Naive thymus-derived CD4-positive, alpha-beta T cell (primary cell): ENCODE measurements at regions of chr1 and their contacts with region 1.

Region 1: DNA sequence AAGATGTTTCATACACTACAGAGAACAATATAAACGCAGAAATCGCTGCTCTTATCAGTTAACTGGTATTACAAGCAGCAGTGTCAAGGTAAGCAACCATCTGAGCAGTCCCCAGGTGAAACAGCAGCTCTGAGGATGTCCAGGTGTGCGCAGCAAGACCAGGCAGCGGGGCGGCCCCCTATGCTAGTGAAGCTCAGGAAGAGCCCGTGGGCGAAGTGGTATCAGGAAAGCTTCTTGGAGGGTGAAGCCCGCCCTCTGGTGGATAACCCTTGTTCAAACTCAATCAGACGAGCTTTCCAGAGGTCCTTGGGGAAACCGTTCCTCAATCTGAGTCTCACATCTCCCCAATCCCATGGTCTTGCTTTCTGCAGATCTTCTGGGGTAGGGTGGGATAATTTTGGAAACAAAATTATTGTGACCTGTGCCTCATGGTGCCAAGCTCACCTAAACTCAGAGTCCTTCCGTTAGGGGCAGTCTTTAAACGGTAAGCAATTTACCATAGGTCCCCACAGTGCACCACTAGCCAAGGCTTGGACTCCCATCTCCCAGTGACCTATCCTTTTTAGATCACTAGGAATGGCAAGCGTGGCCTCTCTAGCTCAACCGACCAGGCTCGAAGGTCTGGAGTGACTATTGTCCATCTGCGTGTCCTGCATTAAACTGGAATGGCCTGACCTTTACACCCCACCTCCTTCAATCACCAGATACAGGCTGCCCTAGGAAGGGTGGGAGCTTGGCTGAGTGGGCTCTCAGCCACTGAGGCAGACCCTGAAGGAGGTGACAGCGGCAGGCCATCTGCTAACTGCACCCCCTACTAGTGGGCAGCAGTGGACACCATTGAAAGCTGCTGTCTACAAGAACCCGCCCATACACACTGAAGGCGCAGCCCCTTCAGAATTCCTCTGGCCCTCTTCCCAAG is 13.6 kb upstream of the FAM110D start:
- DNase-seq: peak; percentile 52 to 77 (median 72)
- ATAC-seq: peak; percentile 99
- H3K4me3 ChIP-seq: no peak overlapping the region
- H3K4me3 Mint-ChIP-seq: peak overlapping the region in 5 of 10 donors; percentile 15 to 66 (median 37)
- H3K27ac ChIP-seq: no peak overlapping the region
- H3K27ac Mint-ChIP-seq: peak overlapping the region in 1 of 9 donors; percentile 19
- H3K4me1 ChIP-seq: no peaks in the 10 kb centered on the region
- H3K4me1 Mint-ChIP-seq: peaks cover 0 to 8% (median 4%) of the 10 kb centered on the region in 7 donors
- H3K27me3 ChIP-seq: no peaks in the 10 kb centered on the region
- H3K27me3 Mint-ChIP-seq: peaks cover 0 to 32% (median 0%) of the 10 kb centered on the region in 5 donors

Region 2: GRCh38 chr1:24878775-24879742 is 1266.2 kb before region 1 on chr1:
- CTCF ChIA-PET with region 1: no interaction called
- POLR2A ChIA-PET with region 1: no interaction called
- intact Hi-C with region 1: no loop called
- DNase-seq: no peak
- ATAC-seq: no peak
- H3K4me3 ChIP-seq: no peak overlapping the region
- H3K4me3 Mint-ChIP-seq: no peak overlapping the region
- H3K27ac ChIP-seq: no peak overlapping the region
- H3K27ac Mint-ChIP-seq: no peak overlapping the region
- H3K4me1 ChIP-seq: no peaks in the 10 kb centered on the region
- H3K4me1 Mint-ChIP-seq: no peaks in the 10 kb centered on the region
- H3K27me3 ChIP-seq: no peaks in the 10 kb centered on the region
- H3K27me3 Mint-ChIP-seq: peaks cover 0 to 58% (median 0%) of the 10 kb centered on the region in 5 donors

Region 3: DNA sequence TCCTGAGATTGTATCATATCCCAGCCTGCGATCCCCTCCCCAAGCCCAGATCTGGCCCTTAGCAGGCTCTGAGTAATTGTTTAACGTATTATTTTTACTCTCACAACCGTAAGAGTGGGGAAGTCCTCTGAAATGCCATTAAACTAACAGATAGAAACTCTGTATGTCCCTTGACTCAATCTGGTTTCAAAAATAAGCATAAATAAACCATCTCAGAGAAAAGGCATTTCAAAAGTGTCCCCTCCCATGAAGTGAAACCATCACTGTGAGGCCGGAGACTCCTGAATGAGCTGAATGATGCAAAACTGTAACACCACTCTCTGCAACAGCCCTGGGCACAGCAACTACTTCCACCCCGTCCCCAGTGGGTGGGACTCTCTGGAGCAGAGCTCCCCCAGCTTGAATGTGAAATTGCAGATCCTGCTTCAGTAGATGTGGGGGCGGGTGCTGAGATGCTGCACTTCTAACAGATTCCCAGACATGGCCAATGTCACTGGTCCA is 1017.1 kb before region 1 on chr1:
- CTCF ChIA-PET with region 1: no interaction called
- POLR2A ChIA-PET with region 1: no interaction called
- intact Hi-C with region 1: no loop called
- DNase-seq: no peak
- ATAC-seq: no peak
- H3K4me3 ChIP-seq: no peak overlapping the region
- H3K4me3 Mint-ChIP-seq: no peak overlapping the region
- H3K27ac ChIP-seq: no peak overlapping the region
- H3K27ac Mint-ChIP-seq: no peak overlapping the region
- H3K4me1 ChIP-seq: no peaks in the 10 kb centered on the region
- H3K4me1 Mint-ChIP-seq: peaks cover 0 to 1% (median 0%) of the 10 kb centered on the region in 7 donors
- H3K27me3 ChIP-seq: no peaks in the 10 kb centered on the region
- H3K27me3 Mint-ChIP-seq: peaks cover 0 to 37% (median 0%) of the 10 kb centered on the region in 5 donors

Region 4: GRCh38 chr1:26094677-26095383 is 50.5 kb before region 1 on chr1:
- CTCF ChIA-PET with region 1: interaction called, 11 read pairs
- POLR2A ChIA-PET with region 1: no interaction called
- intact Hi-C with region 1: no loop called
- DNase-seq: no peak
- ATAC-seq: no peak
- H3K4me3 ChIP-seq: no peak overlapping the region
- H3K4me3 Mint-ChIP-seq: no peak overlapping the region
- H3K27ac ChIP-seq: no peak overlapping the region
- H3K27ac Mint-ChIP-seq: no peak overlapping the region
- H3K4me1 ChIP-seq: no peaks in the 10 kb centered on the region
- H3K4me1 Mint-ChIP-seq: peaks cover 0 to 6% (median 0%) of the 10 kb centered on the region in 7 donors
- H3K27me3 ChIP-seq: no peaks in the 10 kb centered on the region
- H3K27me3 Mint-ChIP-seq: peaks cover 11 to 39% (median 16%) of the 10 kb centered on the region in 5 donors

Region 5: GRCh38 chr1:26102526-26102925 is 42.8 kb before region 1 on chr1:
- CTCF ChIA-PET with region 1: interaction called, 145 read pairs
- POLR2A ChIA-PET with region 1: interaction called, 11 read pairs
- intact Hi-C with region 1: loop called (anchors 1 kb)
- DNase-seq: no peak
- ATAC-seq: no peak
- H3K4me3 ChIP-seq: no peak overlapping the region
- H3K4me3 Mint-ChIP-seq: no peak overlapping the region
- H3K27ac ChIP-seq: no peak overlapping the region
- H3K27ac Mint-ChIP-seq: no peak overlapping the region
- H3K4me1 ChIP-seq: no peaks in the 10 kb centered on the region
- H3K4me1 Mint-ChIP-seq: peaks cover 0 to 13% (median 6%) of the 10 kb centered on the region in 7 donors
- H3K27me3 ChIP-seq: no peaks in the 10 kb centered on the region
- H3K27me3 Mint-ChIP-seq: peaks cover 0 to 27% (median 0%) of the 10 kb centered on the region in 5 donors

Region 6: DNA sequence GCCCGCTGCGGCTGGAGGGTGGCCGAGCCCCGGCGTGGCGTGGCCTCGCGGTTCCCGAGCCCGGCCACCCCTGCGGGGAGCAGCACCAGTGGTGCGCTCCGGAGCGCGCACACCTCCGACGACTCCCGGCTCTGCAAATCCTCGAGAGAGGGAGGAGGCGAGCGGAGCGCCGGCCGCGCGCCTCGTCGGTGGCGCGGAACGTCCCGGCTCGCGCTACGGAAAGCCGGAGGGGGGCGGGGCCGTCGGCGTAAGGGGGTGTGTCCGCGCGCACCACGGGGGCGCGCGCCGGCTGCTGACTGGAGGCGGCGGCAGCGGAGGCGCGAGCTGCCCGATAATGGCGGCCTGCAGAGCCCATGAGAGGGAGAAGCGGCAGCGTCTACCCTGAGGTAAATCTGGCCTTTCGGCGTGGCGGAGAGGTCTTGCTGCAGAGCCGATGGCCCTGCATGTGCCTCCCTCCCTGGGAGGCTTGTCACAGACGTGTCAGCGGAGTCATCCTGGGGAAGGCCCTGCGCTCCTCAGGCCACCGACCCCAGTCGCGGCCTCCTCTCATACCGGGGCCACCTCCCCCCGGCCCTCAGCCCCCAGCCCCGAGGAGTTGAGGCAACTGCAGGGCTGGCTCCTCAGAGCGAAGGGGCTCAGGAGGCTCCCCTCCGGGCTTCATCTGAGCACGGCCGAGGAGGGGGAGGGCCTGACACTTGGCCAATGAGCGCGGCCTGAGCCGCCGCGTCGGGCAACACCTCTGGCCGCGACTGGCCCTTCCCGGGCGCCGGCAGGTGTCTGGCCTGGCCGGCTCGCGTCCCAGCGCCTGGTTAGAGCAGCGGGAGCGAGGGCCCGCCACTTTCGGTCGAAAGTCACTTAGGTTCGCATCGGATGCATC is 33.5 kb before region 1 on chr1 and contains the start of gene PDIK1L:
- CTCF ChIA-PET with region 1: interaction called, 145 read pairs
- POLR2A ChIA-PET with region 1: interaction called, 15 read pairs
- intact Hi-C with region 1: loop called (anchors 1 kb)
- DNase-seq: peak; percentile 91 to 95 (median 94)
- ATAC-seq: peak; percentile 93
- H3K4me3 ChIP-seq: peak within 1 kb of the TSS; percentile 93
- H3K4me3 Mint-ChIP-seq: peak within 1 kb of the TSS; percentile 86 to 99 (median 93)
- H3K27ac ChIP-seq: peak within 1 kb of the TSS; percentile 84
- H3K27ac Mint-ChIP-seq: peak within 1 kb of the TSS; percentile 84 to 98 (median 92)
- H3K4me1 ChIP-seq: peaks cover 12 to 19% of the 10 kb centered on the region in 2 donors
- H3K4me1 Mint-ChIP-seq: peaks cover 6 to 44% (median 34%) of the 10 kb centered on the region in 7 donors
- H3K27me3 ChIP-seq: no peaks in the 10 kb centered on the region
- H3K27me3 Mint-ChIP-seq: no peaks in the 10 kb centered on the region
- total RNA-seq, gene PDIK1L: 9.1 to 29.6 (median 20.3) TPM

Region 7: DNA sequence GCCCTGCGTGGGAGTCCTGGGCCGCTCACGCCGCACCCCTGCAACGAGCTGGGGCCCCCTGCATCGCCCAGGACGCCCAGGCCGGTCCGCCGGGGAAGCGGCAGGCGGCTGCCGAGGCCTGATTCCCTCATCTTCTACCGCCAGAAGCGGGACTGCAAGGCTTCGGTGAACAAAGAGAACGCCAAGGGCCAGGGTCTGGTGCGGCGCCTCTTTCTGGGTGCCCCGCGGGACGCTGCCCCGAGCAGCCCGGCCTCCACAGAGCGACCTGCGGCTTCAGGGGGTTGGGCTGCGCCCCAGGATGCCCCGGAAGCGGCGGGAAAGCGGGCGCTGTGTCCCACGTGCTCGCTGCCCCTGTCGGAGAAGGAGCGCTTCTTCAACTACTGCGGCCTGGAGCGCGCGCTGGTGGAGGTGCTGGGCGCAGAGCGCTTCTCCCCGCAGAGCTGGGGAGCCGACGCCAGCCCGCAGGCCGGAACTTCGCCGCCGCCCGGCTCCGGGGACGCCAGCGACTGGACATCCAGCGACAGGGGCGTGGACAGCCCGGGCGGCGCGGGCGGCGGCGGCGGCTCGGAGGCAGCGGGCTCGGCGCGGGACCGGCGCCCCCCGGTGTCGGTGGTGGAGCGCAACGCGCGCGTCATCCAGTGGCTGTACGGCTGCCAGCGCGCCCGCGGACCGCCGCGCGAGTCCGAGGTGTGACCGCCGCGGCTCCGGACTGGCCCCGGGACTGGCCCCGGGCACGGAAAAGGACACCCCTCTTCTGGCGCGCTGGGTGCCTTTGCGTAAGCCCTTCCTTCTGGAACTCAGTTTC is 16.3 kb after region 1 on chr1:
- CTCF ChIA-PET with region 1: interaction called, 6 read pairs
- POLR2A ChIA-PET with region 1: no interaction called
- intact Hi-C with region 1: loop called in 1 of 2 experiments (anchors 2 kb)
- DNase-seq: peak in 7 of 9 donors; percentile 28 to 59 (median 38)
- ATAC-seq: peak; percentile 66
- H3K4me3 ChIP-seq: peak overlapping the region; percentile 30
- H3K4me3 Mint-ChIP-seq: peak overlapping the region in 9 of 10 donors; percentile 45 to 80 (median 66)
- H3K27ac ChIP-seq: no peak overlapping the region
- H3K27ac Mint-ChIP-seq: no peak overlapping the region
- H3K4me1 ChIP-seq: no peaks in the 10 kb centered on the region
- H3K4me1 Mint-ChIP-seq: peaks cover 0 to 32% (median 11%) of the 10 kb centered on the region in 7 donors
- H3K27me3 ChIP-seq: peaks cover 0 to 11% of the 10 kb centered on the region in 2 donors
- H3K27me3 Mint-ChIP-seq: peaks cover 16 to 61% (median 28%) of the 10 kb centered on the region in 5 donors

Region 8: DNA sequence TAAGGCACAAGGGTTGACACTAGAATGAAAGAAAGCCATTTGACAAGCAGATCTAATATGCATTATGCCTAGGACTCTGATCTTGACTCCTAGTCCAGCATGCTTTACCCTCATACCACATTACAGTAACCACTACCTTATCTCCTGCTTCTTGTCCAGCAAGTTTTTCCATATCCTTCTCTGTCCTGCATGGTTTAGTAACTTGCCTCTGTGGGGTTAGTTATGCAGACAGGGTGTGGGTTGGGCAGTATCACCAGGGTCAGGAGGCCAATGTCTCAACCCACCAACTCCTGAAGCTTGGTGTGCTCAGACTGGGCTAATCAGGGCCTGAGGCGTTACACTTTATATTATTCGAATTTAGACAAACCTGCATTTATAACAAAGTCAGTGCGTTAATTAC is 305.6 kb after region 1 on chr1:
- CTCF ChIA-PET with region 1: no interaction called
- POLR2A ChIA-PET with region 1: no interaction called
- intact Hi-C with region 1: no loop called
- DNase-seq: no peak
- ATAC-seq: no peak
- H3K4me3 ChIP-seq: no peak overlapping the region
- H3K4me3 Mint-ChIP-seq: no peak overlapping the region
- H3K27ac ChIP-seq: no peak overlapping the region
- H3K27ac Mint-ChIP-seq: peak overlapping the region in 1 of 9 donors; percentile 45
- H3K4me1 ChIP-seq: no peaks in the 10 kb centered on the region
- H3K4me1 Mint-ChIP-seq: peaks cover 0 to 3% (median 0%) of the 10 kb centered on the region in 7 donors
- H3K27me3 ChIP-seq: no peaks in the 10 kb centered on the region
- H3K27me3 Mint-ChIP-seq: no peaks in the 10 kb centered on the region